Naive thymus-derived CD4-positive, alpha-beta T cell (primary cell): ENCODE measurements at regions of chr6 and their contacts with region 1.

Region 1: GRCh38 chr6:130282234-130282995 is 59.7 kb upstream of the SAMD3 start:
- DNase-seq: peak in 7 of 9 donors; percentile 8 to 54 (median 43)
- ATAC-seq: peak; percentile 84
- H3K4me3 ChIP-seq: no peak overlapping the region
- H3K4me3 Mint-ChIP-seq: no peak overlapping the region
- H3K27ac ChIP-seq: no peak overlapping the region
- H3K27ac Mint-ChIP-seq: peak overlapping the region in 6 of 9 donors; percentile 12 to 66 (median 49)
- H3K4me1 ChIP-seq: no peaks in the 10 kb centered on the region
- H3K4me1 Mint-ChIP-seq: peaks cover 7 to 18% (median 14%) of the 10 kb centered on the region in 7 donors
- H3K27me3 ChIP-seq: no peaks in the 10 kb centered on the region
- H3K27me3 Mint-ChIP-seq: peaks cover 0 to 4% (median 0%) of the 10 kb centered on the region in 5 donors

Region 2: GRCh38 chr6:129598244-129599187 is 683.9 kb before region 1 on chr6:
- CTCF ChIA-PET with region 1: no interaction called
- POLR2A ChIA-PET with region 1: no interaction called
- intact Hi-C with region 1: loop called in 1 of 2 experiments (anchors 1 kb)
- DNase-seq: peak in 7 of 9 donors; percentile 37 to 79 (median 70)
- ATAC-seq: peak; percentile 95
- H3K4me3 ChIP-seq: no peak overlapping the region
- H3K4me3 Mint-ChIP-seq: no peak overlapping the region
- H3K27ac ChIP-seq: no peak overlapping the region
- H3K27ac Mint-ChIP-seq: no peak overlapping the region
- H3K4me1 ChIP-seq: no peaks in the 10 kb centered on the region
- H3K4me1 Mint-ChIP-seq: peaks cover 0 to 2% (median 0%) of the 10 kb centered on the region in 7 donors
- H3K27me3 ChIP-seq: no peaks in the 10 kb centered on the region
- H3K27me3 Mint-ChIP-seq: peaks cover 0 to 3% (median 0%) of the 10 kb centered on the region in 5 donors

Region 3: DNA sequence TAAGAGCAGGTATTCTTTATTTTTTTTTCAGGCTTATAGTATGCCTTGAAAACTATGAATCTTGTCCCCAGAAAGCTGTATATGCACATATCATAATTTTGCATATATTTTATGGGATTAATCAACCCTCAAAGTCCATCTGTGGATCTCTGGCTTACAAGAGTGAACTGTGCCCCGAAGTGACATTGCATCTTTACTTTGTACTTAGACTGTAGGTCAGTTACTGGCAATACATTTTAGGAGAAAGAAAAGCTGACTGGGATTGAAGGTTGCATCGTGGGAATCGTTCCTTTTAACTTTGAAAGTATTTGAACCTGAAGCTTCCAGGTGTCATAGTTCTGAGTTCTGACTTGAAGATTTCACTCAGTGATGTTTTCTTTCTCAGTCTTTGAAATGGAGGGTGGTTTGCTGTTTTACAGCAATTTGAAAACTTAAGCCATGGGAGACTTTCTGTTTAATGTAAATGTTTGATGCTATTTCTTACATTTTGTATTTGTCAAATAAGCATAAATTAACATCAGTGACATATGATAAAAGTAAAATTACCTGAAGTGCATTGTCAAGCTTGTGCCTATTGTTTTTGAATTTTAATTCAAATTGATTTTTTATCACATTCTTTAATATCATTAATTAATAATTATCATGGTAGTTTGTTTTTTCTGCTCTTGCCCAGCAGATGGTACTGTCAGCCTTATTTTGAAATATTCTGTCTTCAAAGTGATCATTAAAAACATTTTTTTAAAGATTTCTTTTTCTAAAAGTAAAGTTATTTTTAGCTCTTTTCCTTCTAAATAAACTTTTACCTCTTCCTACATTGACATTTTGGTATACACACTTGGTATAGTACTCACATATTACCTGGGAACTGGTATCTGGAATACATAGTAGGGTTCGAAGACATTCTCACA is 235.1 kb before region 1 on chr6:
- CTCF ChIA-PET with region 1: interaction called, 3 read pairs
- POLR2A ChIA-PET with region 1: no interaction called
- intact Hi-C with region 1: loop called in 1 of 2 experiments (anchors 1 kb)
- DNase-seq: no peak
- ATAC-seq: no peak
- H3K4me3 ChIP-seq: no peak overlapping the region
- H3K4me3 Mint-ChIP-seq: no peak overlapping the region
- H3K27ac ChIP-seq: no peak overlapping the region
- H3K27ac Mint-ChIP-seq: peak overlapping the region in 2 of 9 donors; percentile 12 to 24
- H3K4me1 ChIP-seq: no peaks in the 10 kb centered on the region
- H3K4me1 Mint-ChIP-seq: peaks cover 9 to 27% (median 15%) of the 10 kb centered on the region in 7 donors
- H3K27me3 ChIP-seq: no peaks in the 10 kb centered on the region
- H3K27me3 Mint-ChIP-seq: no peaks in the 10 kb centered on the region

Region 4: GRCh38 chr6:130148181-130148580 is 134.2 kb before region 1 on chr6:
- CTCF ChIA-PET with region 1: interaction called, 9 read pairs
- POLR2A ChIA-PET with region 1: no interaction called
- intact Hi-C with region 1: loop called in 1 of 2 experiments (anchors 1 kb)
- DNase-seq: peak in 1 of 9 donors; percentile 20
- ATAC-seq: peak; percentile 55
- H3K4me3 ChIP-seq: no peak overlapping the region
- H3K4me3 Mint-ChIP-seq: peak overlapping the region in 1 of 10 donors; percentile 26
- H3K27ac ChIP-seq: no peak overlapping the region
- H3K27ac Mint-ChIP-seq: peak overlapping the region in 6 of 9 donors; percentile 8 to 78 (median 43)
- H3K4me1 ChIP-seq: no peaks in the 10 kb centered on the region
- H3K4me1 Mint-ChIP-seq: peaks cover 2 to 25% (median 8%) of the 10 kb centered on the region in 7 donors
- H3K27me3 ChIP-seq: no peaks in the 10 kb centered on the region
- H3K27me3 Mint-ChIP-seq: no peaks in the 10 kb centered on the region